ENCODE measurements at regions of chr15 and their contacts with region 1.

Region 1: DNA sequence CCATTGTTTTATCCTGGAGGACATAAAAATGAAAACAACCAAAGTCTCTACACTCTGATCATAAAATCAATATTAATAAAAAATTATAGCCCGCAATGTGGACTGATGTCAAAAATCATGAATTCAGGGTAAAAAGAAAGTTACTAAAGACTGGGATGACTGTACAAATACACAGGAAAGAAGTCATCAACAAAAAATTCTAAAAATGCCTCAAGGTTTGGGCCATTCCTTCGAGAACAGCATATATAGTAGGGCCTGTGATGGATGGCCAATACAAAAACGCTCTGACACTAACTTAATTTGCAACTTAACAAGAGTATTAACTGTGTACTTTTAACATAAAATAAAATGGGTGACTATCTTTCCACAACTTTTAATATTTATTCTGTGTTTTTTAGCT is 76.8 kb downstream of the THBS1 start:
- DNase-seq: no peak
- ATAC-seq: no peak
- H3K4me3 ChIP-seq: no peak overlapping the region
- H3K27ac ChIP-seq: no peak overlapping the region
- H3K4me1 ChIP-seq: no peaks in the 10 kb centered on the region
- H3K27me3 ChIP-seq: no peaks in the 10 kb centered on the region
- CTCF ChIP-seq: no peak

Region 2: DNA sequence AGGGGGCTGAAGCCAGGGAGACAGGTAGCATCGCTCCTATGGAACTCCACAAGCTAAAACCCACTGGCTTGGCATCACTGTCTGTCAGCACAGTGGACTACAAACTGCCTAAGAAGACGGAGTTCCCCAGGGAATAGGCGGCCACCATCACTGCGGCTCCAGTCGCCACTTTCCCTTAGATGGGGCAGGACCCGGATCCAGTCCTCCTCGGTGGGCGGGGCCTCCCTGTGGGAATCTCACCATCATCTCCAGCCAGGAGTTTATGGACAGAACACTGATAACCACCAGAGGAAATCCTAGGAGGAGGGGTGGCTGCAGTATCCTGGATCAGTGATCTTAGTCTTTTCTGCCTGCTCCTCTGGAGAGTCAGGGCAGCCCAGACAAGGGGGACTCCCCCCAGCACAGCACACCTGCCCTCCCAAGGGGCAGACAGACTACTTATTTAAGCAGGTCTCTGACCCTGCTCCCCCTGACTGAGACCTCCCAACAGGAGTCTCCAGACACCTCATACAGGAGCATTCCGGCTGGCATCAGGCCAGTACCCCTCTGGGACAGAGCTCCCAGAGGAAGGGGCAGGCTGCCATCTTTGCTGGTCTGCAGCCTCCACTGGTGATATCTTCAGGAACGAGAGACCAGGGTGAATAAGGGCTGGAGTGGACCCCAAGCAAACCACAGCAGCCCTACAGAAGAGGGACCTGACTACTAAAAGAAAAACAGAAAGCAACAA is 657.5 kb before region 1 on chr15:
- CTCF ChIA-PET with region 1: no interaction called
- POLR2A ChIA-PET with region 1: no interaction called
- in situ Hi-C with region 1: no loop called
- intact Hi-C with region 1: no loop called
- DNase-seq: no peak
- ATAC-seq: no peak
- H3K4me3 ChIP-seq: no peak overlapping the region
- H3K27ac ChIP-seq: no peak overlapping the region
- H3K4me1 ChIP-seq: no peaks in the 10 kb centered on the region
- H3K27me3 ChIP-seq: no peaks in the 10 kb centered on the region
- CTCF ChIP-seq: no peak

Region 3: DNA sequence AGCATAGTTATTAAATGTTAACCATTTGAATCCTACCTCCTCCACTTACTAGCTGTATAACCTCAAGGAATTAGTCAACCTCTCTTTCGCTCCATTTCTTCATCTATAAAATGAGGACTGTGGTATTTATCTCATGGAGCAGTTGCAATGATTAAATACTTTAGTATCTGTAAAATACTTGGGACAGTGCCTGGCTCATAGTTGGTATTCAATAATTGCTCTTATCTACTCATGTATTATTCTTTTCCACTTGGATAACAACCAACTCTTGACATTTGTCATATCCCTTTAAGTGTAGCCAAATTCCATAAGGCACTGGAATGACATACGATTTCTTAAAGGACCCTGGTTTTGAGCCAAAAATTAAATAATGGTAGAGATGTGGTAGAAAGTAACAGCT is 53.0 kb after region 1 on chr15:
- CTCF ChIA-PET with region 1: no interaction called
- POLR2A ChIA-PET with region 1: no interaction called
- in situ Hi-C with region 1: no loop called
- intact Hi-C with region 1: loop called (anchors 10 kb)
- DNase-seq: no peak
- ATAC-seq: no peak
- H3K4me3 ChIP-seq: no peak overlapping the region
- H3K27ac ChIP-seq: no peak overlapping the region
- H3K4me1 ChIP-seq: no peaks in the 10 kb centered on the region
- H3K27me3 ChIP-seq: no peaks in the 10 kb centered on the region
- CTCF ChIP-seq: no peak

Measured in Panc1 (cell line).